ENCODE measurements at regions of chr2 and their contacts with region 1.

Region 1: DNA sequence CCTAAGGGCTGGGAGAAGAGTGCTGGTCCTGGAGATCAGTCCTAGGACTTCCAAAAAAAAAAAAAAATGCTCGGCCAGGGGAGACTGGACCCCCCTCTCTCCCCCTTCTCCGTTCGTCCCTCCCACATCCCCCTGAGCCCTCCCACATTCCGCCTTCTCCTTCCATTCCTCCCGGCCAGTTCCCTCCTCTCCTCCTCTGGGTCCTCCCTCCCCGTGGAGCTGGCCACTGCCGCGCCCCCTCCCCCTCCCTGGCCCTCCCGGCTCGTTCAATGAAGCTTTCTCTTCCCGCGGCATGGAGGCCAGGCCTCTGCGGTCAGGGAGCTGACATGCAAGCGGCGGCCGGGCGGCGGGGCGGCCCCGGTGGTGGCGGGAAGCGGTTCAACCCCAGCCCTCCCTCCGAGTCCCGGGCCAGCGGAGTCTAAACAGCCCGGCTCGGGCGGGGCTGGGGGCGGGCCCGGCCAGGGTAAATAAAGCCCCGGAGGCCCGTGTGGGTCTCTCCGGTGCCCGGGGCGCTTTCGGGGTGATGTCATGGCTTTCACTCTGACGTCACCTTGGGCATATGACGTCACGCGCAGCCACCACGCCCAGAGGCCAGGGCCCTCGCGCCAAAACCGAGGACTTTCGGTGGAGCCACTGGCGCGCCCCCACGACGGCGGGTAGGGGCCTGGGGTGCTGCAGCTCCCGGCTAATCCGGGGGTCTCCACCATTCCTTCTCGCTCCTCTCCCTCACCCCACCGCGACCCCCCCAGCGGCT is at the start of gene LOXL3:
- DNase-seq: peak; percentile 72
- H3K4me3 ChIP-seq: peak within 1 kb of the TSS; percentile 76
- H3K27ac ChIP-seq: peak within 1 kb of the TSS; percentile 78
- H3K4me1 ChIP-seq: peaks cover 4% of the 10 kb centered on the region
- H3K27me3 ChIP-seq: no peaks in the 10 kb centered on the region
- CTCF ChIP-seq: no peak
- total RNA-seq, gene LOXL3: 0.88 and 1.9 TPM in 2 replicates

Region 2: GRCh38 chr2:74471332-74472065 is 82.6 kb before region 1 on chr2:
- CTCF ChIA-PET with region 1: no interaction called
- POLR2A ChIA-PET with region 1: interaction called, 26 read pairs
- intact Hi-C with region 1: no loop called
- DNase-seq: no peak
- H3K4me3 ChIP-seq: peak overlapping the region; percentile 59
- H3K27ac ChIP-seq: peak overlapping the region; percentile 88
- H3K4me1 ChIP-seq: peaks cover 7% of the 10 kb centered on the region
- H3K27me3 ChIP-seq: no peaks in the 10 kb centered on the region
- CTCF ChIP-seq: no peak

Region 3: GRCh38 chr2:74525717-74526648 is 28.1 kb before region 1 on chr2 and contains the start of gene DQX1:
- CTCF ChIA-PET with region 1: no interaction called
- POLR2A ChIA-PET with region 1: no interaction called
- intact Hi-C with region 1: no loop called
- DNase-seq: peak; percentile 44
- H3K4me3 ChIP-seq: no peak within 1 kb of the TSS
- H3K27ac ChIP-seq: no peak within 1 kb of the TSS
- H3K4me1 ChIP-seq: peaks cover 11% of the 10 kb centered on the region
- H3K27me3 ChIP-seq: no peaks in the 10 kb centered on the region
- CTCF ChIP-seq: no peak
- total RNA-seq, gene DQX1: 0.50 and 0.71 TPM in 2 replicates

Region 4: GRCh38 chr2:74587664-74588277 is 33.7 kb after region 1 on chr2:
- CTCF ChIA-PET with region 1: no interaction called
- POLR2A ChIA-PET with region 1: no interaction called
- intact Hi-C with region 1: no loop called
- DNase-seq: peak; percentile 79
- H3K4me3 ChIP-seq: no peak overlapping the region
- H3K27ac ChIP-seq: no peak overlapping the region
- H3K4me1 ChIP-seq: peaks cover 14% of the 10 kb centered on the region
- H3K27me3 ChIP-seq: no peaks in the 10 kb centered on the region
- CTCF ChIP-seq: peak; percentile 76

Region 5: GRCh38 chr2:74740389-74741075 is 186.5 kb after region 1 on chr2:
- CTCF ChIA-PET with region 1: no interaction called
- POLR2A ChIA-PET with region 1: no interaction called
- intact Hi-C with region 1: no loop called
- DNase-seq: peak; percentile 72
- H3K4me3 ChIP-seq: no peak overlapping the region
- H3K27ac ChIP-seq: no peak overlapping the region
- H3K4me1 ChIP-seq: peaks cover 24% of the 10 kb centered on the region
- H3K27me3 ChIP-seq: no peaks in the 10 kb centered on the region
- CTCF ChIP-seq: no peak

Region 6: DNA sequence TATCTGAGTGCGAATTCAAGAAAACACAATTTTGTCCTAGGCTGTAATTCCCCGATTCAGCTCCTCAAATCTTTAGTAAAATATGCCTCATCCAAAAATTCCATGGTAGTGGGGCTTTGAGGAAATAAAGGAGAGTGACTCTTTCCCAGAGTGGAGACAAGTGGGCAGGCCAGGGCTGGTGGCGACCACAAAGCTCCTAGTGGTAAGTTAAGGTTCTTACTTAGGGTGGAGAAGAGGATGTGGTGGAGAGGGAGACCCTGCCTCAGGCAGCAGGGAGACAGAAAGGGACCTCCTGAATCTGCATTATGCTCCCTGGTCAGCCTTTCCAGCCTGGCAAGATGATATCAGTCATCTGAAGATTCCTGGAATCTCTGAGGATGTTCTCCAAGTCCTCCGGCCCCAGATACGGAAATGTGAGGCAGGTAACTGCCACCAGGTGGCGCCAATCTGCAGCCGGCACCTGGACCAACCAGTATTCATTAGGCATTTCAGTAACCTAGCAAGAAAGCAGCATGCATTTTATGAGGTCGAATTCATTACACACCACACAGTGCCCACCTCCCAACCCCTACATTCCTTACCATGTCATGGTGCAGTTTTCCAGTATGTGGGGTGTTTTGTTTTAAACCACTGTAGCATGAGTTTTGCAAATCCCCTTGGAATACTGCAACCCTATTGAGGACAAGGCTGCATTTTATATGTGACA is 510.8 kb after region 1 on chr2:
- CTCF ChIA-PET with region 1: no interaction called
- POLR2A ChIA-PET with region 1: no interaction called
- intact Hi-C with region 1: no loop called
- DNase-seq: peak; percentile 72
- H3K4me3 ChIP-seq: no peak overlapping the region
- H3K27ac ChIP-seq: no peak overlapping the region
- H3K4me1 ChIP-seq: no peaks in the 10 kb centered on the region
- H3K27me3 ChIP-seq: no peaks in the 10 kb centered on the region
- CTCF ChIP-seq: peak; percentile 97

Measured in A673 (cell line).